CD4-positive, alpha-beta T cell (primary cell): ENCODE measurements at regions of chr15 and their contacts with region 1.

Region 1: GRCh38 chr15:95726891-95727290 is 603.6 kb upstream of the NR2F2 start:
- DNase-seq: no peak
- ATAC-seq: no peak
- H3K4me3 ChIP-seq: no peak overlapping the region
- H3K4me3 Mint-ChIP-seq: no peak overlapping the region
- H3K27ac ChIP-seq: no peak overlapping the region
- H3K27ac Mint-ChIP-seq: no peak overlapping the region
- H3K4me1 ChIP-seq: no peaks in the 10 kb centered on the region
- H3K4me1 Mint-ChIP-seq: no peaks in the 10 kb centered on the region
- H3K27me3 ChIP-seq: no peaks in the 10 kb centered on the region
- H3K27me3 Mint-ChIP-seq: peaks cover 13% of the 10 kb centered on the region
- CTCF ChIP-seq: no peak

Region 2: DNA sequence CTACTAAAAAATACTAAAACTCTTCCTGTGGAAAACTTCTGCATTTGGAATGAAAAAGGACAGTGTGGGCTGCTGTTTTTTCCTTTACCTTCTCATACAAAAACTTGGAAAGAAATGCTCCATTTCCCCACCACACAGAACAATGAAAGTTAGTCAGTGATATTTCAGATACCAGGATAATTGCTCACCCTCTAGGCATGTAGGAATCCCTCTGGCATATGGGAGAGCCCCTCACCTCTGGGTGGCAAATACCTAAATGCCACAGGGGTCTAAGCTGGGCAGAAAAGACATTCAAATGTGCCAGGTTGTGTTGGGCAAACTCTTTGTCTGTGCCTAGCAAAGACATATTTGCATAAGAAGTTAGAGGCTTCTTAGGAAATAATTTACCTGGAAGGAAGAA is 43.3 kb after region 1 on chr15:
- CTCF ChIA-PET with region 1: no interaction called
- POLR2A ChIA-PET with region 1: no interaction called
- intact Hi-C with region 1: no loop called
- DNase-seq: no peak
- ATAC-seq: no peak
- H3K4me3 ChIP-seq: no peak overlapping the region
- H3K4me3 Mint-ChIP-seq: no peak overlapping the region
- H3K27ac ChIP-seq: no peak overlapping the region
- H3K27ac Mint-ChIP-seq: no peak overlapping the region
- H3K4me1 ChIP-seq: no peaks in the 10 kb centered on the region
- H3K4me1 Mint-ChIP-seq: no peaks in the 10 kb centered on the region
- H3K27me3 ChIP-seq: no peaks in the 10 kb centered on the region
- H3K27me3 Mint-ChIP-seq: peaks cover 5% of the 10 kb centered on the region
- CTCF ChIP-seq: no peak

Region 3: GRCh38 chr15:95784508-95784907 is 57.6 kb after region 1 on chr15:
- CTCF ChIA-PET with region 1: no interaction called
- POLR2A ChIA-PET with region 1: no interaction called
- intact Hi-C with region 1: loop called in 1 of 2 experiments (anchors 10 kb)
- DNase-seq: no peak
- ATAC-seq: no peak
- H3K4me3 ChIP-seq: no peak overlapping the region
- H3K4me3 Mint-ChIP-seq: no peak overlapping the region
- H3K27ac ChIP-seq: no peak overlapping the region
- H3K27ac Mint-ChIP-seq: no peak overlapping the region
- H3K4me1 ChIP-seq: no peaks in the 10 kb centered on the region
- H3K4me1 Mint-ChIP-seq: no peaks in the 10 kb centered on the region
- H3K27me3 ChIP-seq: no peaks in the 10 kb centered on the region
- H3K27me3 Mint-ChIP-seq: no peaks in the 10 kb centered on the region
- CTCF ChIP-seq: no peak

Region 4: GRCh38 chr15:96276438-96277210 is 549.7 kb after region 1 on chr15:
- CTCF ChIA-PET with region 1: no interaction called
- POLR2A ChIA-PET with region 1: no interaction called
- intact Hi-C with region 1: no loop called
- DNase-seq: no peak
- ATAC-seq: no peak
- H3K4me3 ChIP-seq: no peak overlapping the region
- H3K4me3 Mint-ChIP-seq: no peak overlapping the region
- H3K27ac ChIP-seq: no peak overlapping the region
- H3K27ac Mint-ChIP-seq: no peak overlapping the region
- H3K4me1 ChIP-seq: no peaks in the 10 kb centered on the region
- H3K4me1 Mint-ChIP-seq: no peaks in the 10 kb centered on the region
- H3K27me3 ChIP-seq: no peaks in the 10 kb centered on the region
- H3K27me3 Mint-ChIP-seq: peaks cover 2% of the 10 kb centered on the region
- CTCF ChIP-seq: no peak